ENCODE measurements at regions of chr12 and their contacts with region 1.

Region 1: DNA sequence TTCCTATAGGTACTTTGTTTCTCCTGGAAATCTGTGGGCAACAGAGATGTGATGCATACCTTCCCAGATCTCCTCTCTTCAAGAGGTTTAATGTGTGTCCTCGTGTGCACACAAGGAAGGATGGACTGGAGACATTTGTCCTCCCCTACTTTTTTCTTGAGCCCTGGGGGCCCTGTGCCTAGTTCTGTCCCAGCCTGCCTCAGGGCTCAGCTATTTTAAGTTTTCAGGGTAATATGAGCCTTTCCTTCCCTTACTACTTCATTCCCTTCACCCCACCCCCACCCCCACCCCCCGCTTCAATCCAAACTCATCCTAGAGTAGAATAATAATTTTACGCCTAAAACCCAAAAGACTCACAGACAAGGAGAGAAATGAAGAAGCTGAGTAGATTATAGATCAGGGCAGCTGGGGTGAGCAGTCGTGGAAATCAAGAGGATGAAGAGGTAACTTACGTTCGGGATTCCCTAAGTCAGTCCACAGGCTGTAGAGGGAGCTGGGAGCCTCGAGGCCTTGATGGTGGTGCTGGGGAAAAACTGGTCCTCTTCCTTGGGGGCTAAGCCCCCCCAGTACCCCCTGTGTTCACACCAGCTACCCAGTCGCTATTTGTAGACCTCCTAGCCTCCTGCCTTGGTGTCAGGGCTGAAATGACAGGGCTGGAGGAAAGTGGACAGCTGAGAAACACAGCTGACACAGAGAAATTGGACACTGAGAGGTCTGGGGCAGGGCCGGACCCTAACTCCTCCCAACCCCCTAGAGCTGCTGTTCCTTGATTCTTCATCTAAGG is at the start of gene STAC3:
- DNase-seq: no peak
- ATAC-seq: no peak
- H3K4me3 Mint-ChIP-seq: no peak within 1 kb of the TSS
- H3K27ac Mint-ChIP-seq: no peak within 1 kb of the TSS
- H3K4me1 Mint-ChIP-seq: peaks cover 2% of the 10 kb centered on the region
- H3K27me3 Mint-ChIP-seq: no peaks in the 10 kb centered on the region
- total RNA-seq, gene STAC3: 2.5 to 2.8 TPM

Region 2: GRCh38 chr12:57078519-57079404 is 172.0 kb before region 1 on chr12 and contains the start of gene NEMP1:
- CTCF ChIA-PET with region 1: no interaction called
- POLR2A ChIA-PET with region 1: no interaction called
- intact Hi-C with region 1: no loop called
- DNase-seq: peak; percentile 97
- ATAC-seq: peak; percentile 95
- H3K4me3 Mint-ChIP-seq: peak within 1 kb of the TSS; percentile 97
- H3K27ac Mint-ChIP-seq: peak within 1 kb of the TSS; percentile 94
- H3K4me1 Mint-ChIP-seq: peaks cover 29% of the 10 kb centered on the region
- H3K27me3 Mint-ChIP-seq: no peaks in the 10 kb centered on the region
- total RNA-seq, gene NEMP1: 79.0 to 81.1 TPM

Region 3: GRCh38 chr12:57238854-57239554 is 11.7 kb before region 1 on chr12:
- CTCF ChIA-PET with region 1: interaction called, 20 read pairs
- POLR2A ChIA-PET with region 1: no interaction called
- intact Hi-C with region 1: no loop called
- DNase-seq: peak; percentile 94
- ATAC-seq: peak; percentile 57
- H3K4me3 Mint-ChIP-seq: peak overlapping the region; percentile 83
- H3K27ac Mint-ChIP-seq: peak overlapping the region; percentile 80
- H3K4me1 Mint-ChIP-seq: peaks cover 70% of the 10 kb centered on the region
- H3K27me3 Mint-ChIP-seq: peaks cover 44% of the 10 kb centered on the region